Mammary epithelial cell (primary cell): ENCODE measurements at regions of chr2 and their contacts with region 1.

Region 1: DNA sequence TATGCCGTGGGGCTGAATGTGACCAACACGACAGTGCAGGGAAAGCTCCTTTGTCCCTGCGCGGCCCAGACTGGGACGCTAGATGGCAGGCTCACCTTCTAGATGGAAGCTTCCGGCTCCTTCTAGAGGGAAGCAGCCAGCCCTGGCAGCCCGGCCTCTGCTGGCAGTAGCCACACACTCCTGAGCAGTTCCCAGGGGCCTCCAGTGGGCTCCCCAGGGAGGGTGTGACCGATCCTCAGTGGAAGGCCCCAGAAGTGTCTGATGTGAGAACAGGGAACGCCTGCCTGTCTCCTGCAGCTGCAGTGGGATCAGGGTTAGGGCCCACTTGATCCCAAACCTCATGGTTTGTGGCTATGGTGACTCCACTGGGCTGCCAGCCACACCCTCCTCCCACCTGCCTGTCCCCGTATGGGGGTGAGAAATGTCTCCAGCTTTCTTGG is 48.5 kb upstream of the LRPPRC start:
- DNase-seq: peak; percentile 65
- H3K4me3 ChIP-seq: no peak overlapping the region
- H3K27ac ChIP-seq: no peak overlapping the region
- H3K4me1 ChIP-seq: no peaks in the 10 kb centered on the region
- H3K27me3 ChIP-seq: peaks cover 1% of the 10 kb centered on the region
- CTCF ChIP-seq: peak; percentile 92 to 97

Region 2: DNA sequence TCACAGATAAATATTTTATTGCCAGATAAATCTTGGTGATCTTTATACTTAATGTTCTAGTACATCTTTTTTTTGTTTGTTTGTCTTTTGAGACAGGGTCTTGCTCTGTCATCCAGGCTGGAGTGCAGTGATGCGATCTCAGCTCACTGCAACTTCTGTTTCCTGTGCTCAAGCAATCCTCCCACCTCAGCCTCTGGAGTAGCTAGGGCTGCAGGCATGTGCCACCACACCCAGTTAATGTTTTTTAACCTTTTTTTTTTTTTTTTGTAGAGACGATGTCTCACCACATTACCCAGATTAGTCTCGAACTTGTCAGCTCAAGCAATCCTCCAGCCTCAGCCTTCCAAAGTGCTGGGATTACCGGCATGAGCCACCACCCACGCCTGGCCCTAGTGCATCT is 358.9 kb before region 1 on chr2:
- CTCF ChIA-PET with region 1: no interaction called
- dilution Hi-C with region 1: no loop called
- in situ Hi-C with region 1: no loop called
- intact Hi-C with region 1: no loop called
- DNase-seq: peak; percentile 12
- H3K4me3 ChIP-seq: no peak overlapping the region
- H3K27ac ChIP-seq: no peak overlapping the region
- H3K4me1 ChIP-seq: no peaks in the 10 kb centered on the region
- H3K27me3 ChIP-seq: peaks cover 3% of the 10 kb centered on the region
- CTCF ChIP-seq: no peak

Region 3: DNA sequence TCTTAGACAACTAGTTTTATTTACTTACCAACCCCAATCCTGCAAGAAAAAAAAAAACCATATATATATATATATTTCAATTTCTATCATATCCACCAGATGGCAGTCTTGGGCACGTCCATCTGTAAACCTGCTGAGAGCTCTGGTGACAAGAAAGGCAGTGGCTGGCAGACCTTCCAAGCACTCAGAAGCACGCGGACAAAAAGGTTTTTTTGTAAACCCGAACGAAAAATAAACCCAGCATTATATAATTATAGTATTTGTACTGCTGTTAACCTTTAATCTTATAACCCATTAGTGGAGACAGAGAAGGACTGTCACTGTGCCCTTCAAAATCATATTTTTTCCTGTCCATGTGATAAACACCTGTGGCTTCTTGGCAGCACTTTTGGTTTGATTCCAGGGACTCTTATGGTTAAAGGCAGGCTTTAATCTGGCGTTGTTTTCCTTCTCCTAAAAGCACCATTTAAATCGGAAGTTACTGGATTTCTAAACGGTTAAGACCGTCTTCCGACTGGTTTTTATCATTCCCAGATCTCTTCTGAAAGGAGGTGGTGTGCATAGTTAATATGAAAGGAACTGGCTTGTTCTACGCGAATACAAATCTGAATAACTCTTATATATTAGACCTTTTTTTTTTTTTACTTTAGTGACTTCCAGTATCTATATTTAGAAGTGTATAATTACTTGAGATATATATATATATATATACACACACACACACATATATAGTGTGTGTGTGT is 200.0 kb after region 1 on chr2:
- CTCF ChIA-PET with region 1: interaction called, 3 read pairs
- dilution Hi-C with region 1: no loop called
- in situ Hi-C with region 1: no loop called
- intact Hi-C with region 1: loop called (anchors 1 kb)
- DNase-seq: peak; percentile 37
- H3K4me3 ChIP-seq: peak overlapping the region in 2 of 3 experiments; percentile 39 to 46
- H3K27ac ChIP-seq: no peak overlapping the region
- H3K4me1 ChIP-seq: peaks cover 13% of the 10 kb centered on the region
- H3K27me3 ChIP-seq: no peaks in the 10 kb centered on the region
- CTCF ChIP-seq: peak; percentile 30 to 60

Region 4: GRCh38 chr2:44342854-44343253 is 298.6 kb after region 1 on chr2:
- CTCF ChIA-PET with region 1: no interaction called
- dilution Hi-C with region 1: no loop called
- in situ Hi-C with region 1: no loop called
- intact Hi-C with region 1: loop called (anchors 1 kb)
- DNase-seq: no peak
- H3K4me3 ChIP-seq: no peak overlapping the region
- H3K27ac ChIP-seq: no peak overlapping the region
- H3K4me1 ChIP-seq: no peaks in the 10 kb centered on the region
- H3K27me3 ChIP-seq: no peaks in the 10 kb centered on the region
- CTCF ChIP-seq: peak; percentile 23 to 43

Region 5: GRCh38 chr2:44479122-44479887 is 435.0 kb after region 1 on chr2:
- CTCF ChIA-PET with region 1: no interaction called
- dilution Hi-C with region 1: no loop called
- in situ Hi-C with region 1: no loop called
- intact Hi-C with region 1: loop called (anchors 2 kb)
- DNase-seq: peak; percentile 69
- H3K4me3 ChIP-seq: no peak overlapping the region
- H3K27ac ChIP-seq: no peak overlapping the region
- H3K4me1 ChIP-seq: no peaks in the 10 kb centered on the region
- H3K27me3 ChIP-seq: no peaks in the 10 kb centered on the region
- CTCF ChIP-seq: peak; percentile 100

Region 6: DNA sequence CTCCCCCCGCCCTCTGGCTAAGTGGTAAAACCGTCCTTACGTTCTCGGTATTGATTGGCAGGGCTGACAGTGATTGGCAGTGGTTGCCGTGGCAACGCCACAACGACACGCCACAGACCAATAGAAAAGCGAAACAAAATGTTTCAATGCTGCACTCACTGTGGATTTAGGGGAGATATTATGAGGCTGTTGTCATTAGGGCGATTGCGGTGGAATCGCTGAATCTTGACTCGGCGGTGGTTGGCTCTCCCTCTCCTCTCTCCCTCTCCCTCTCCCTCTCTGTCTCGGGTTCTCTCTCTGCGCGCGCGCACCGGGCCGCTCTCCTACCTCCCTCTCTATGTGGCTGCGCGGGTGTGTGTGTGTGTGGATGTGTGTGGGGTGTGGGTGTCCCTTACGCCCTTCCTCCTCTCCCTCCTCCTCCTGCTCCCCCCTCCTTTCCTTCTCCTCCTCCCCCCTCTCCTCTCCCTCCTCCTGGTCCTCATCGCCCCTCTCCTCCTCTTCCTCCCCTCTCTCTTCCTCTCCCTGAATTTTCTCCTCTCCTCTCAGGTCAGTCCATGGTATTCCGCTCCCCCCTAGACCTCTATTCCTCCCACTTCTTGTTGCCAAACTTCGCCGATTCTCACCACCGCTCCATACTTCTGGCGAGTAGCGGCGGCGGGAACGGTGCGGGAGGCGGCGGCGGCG is 897.4 kb after region 1 on chr2 and contains the start of gene SIX3:
- CTCF ChIA-PET with region 1: no interaction called
- dilution Hi-C with region 1: no loop called
- in situ Hi-C with region 1: loop called in 1 of 2 experiments (anchors 25 kb)
- intact Hi-C with region 1: no loop called
- DNase-seq: peak; percentile 42
- H3K4me3 ChIP-seq: peak within 1 kb of the TSS; percentile 0 to 34 (median 23)
- H3K27ac ChIP-seq: no peak within 1 kb of the TSS
- H3K4me1 ChIP-seq: peaks cover 15% of the 10 kb centered on the region
- H3K27me3 ChIP-seq: peaks cover 73% of the 10 kb centered on the region
- CTCF ChIP-seq: no peak
- total RNA-seq, gene SIX3: not detected

Region 7: GRCh38 chr2:44974064-44974715 is 929.9 kb after region 1 on chr2:
- CTCF ChIA-PET with region 1: interaction called, 11 read pairs
- dilution Hi-C with region 1: no loop called
- in situ Hi-C with region 1: loop called in 1 of 2 experiments (anchors 25 kb)
- intact Hi-C with region 1: loop called (anchors 5 kb)
- DNase-seq: peak; percentile 53
- H3K4me3 ChIP-seq: no peak overlapping the region
- H3K27ac ChIP-seq: no peak overlapping the region
- H3K4me1 ChIP-seq: peaks cover 5% of the 10 kb centered on the region
- H3K27me3 ChIP-seq: no peaks in the 10 kb centered on the region
- CTCF ChIP-seq: peak; percentile 54 to 78